ENCODE measurements at regions of chr14 and their contacts with region 1.

Region 1: GRCh38 chr14:77862154-77862786 is 62.4 kb downstream of the ADCK1 start:
- DNase-seq: peak; percentile 52 to 83 (median 70)
- ATAC-seq: peak; percentile 38
- H3K4me3 ChIP-seq: no peak overlapping the region
- H3K4me3 Mint-ChIP-seq: no peak overlapping the region
- H3K27ac ChIP-seq: no peak overlapping the region
- H3K27ac Mint-ChIP-seq: no peak overlapping the region
- H3K4me1 ChIP-seq: no peaks in the 10 kb centered on the region
- H3K4me1 Mint-ChIP-seq: no peaks in the 10 kb centered on the region
- H3K27me3 ChIP-seq: no peaks in the 10 kb centered on the region
- H3K27me3 Mint-ChIP-seq: no peaks in the 10 kb centered on the region
- CTCF ChIP-seq: peak; percentile 78

Region 2: DNA sequence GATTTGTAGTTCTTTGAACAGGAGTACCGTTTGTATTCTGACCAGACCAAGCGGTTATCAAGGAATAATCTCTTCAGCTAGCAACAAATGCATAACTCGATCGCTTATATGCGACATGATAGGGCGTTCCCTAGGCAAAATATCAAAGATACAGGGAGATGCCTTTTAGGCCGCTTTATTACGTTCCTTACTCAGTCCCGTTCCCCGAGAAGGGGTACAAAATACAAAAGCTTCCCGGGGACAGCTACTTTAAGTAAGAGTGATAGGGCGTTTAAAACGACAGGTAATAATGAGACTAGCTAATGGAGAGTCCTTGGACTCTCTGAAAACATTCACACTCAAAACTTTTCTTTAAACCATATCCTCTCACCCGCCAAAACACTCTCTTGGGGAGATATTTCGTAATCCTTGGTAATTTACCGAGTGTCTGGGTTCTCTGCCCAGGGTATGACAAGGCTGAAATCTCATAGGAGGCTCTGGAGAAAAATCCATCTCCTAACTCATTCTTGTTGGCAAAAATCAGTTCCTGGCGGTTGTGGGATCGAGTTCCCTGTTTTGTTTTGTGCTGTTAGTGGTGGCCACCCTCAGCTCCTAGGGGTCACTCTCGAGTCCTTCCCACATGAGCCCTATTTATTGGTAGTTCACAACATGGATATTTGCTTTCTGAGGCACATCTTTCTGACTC is 100.9 kb before region 1 on chr14:
- CTCF ChIA-PET with region 1: no interaction called
- POLR2A ChIA-PET with region 1: no interaction called
- intact Hi-C with region 1: no loop called
- DNase-seq: peak in 1 of 9 experiments; percentile 34
- ATAC-seq: peak; percentile 16
- H3K4me3 ChIP-seq: peak overlapping the region; percentile 78 to 90
- H3K4me3 Mint-ChIP-seq: peak overlapping the region; percentile 96
- H3K27ac ChIP-seq: peak overlapping the region; percentile 97 to 99
- H3K27ac Mint-ChIP-seq: peak overlapping the region; percentile 98
- H3K4me1 ChIP-seq: peaks cover 34% of the 10 kb centered on the region
- H3K4me1 Mint-ChIP-seq: peaks cover 43% of the 10 kb centered on the region
- H3K27me3 ChIP-seq: no peaks in the 10 kb centered on the region
- H3K27me3 Mint-ChIP-seq: no peaks in the 10 kb centered on the region
- CTCF ChIP-seq: no peak

Region 3: GRCh38 chr14:77872983-77873382 is 10.7 kb after region 1 on chr14:
- CTCF ChIA-PET with region 1: interaction called, 12 read pairs
- POLR2A ChIA-PET with region 1: no interaction called
- intact Hi-C with region 1: no loop called
- DNase-seq: no peak
- ATAC-seq: no peak
- H3K4me3 ChIP-seq: no peak overlapping the region
- H3K4me3 Mint-ChIP-seq: no peak overlapping the region
- H3K27ac ChIP-seq: no peak overlapping the region
- H3K27ac Mint-ChIP-seq: no peak overlapping the region
- H3K4me1 ChIP-seq: no peaks in the 10 kb centered on the region
- H3K4me1 Mint-ChIP-seq: no peaks in the 10 kb centered on the region
- H3K27me3 ChIP-seq: no peaks in the 10 kb centered on the region
- H3K27me3 Mint-ChIP-seq: no peaks in the 10 kb centered on the region
- CTCF ChIP-seq: no peak

Region 4: GRCh38 chr14:78048120-78048519 is 185.8 kb after region 1 on chr14:
- CTCF ChIA-PET with region 1: no interaction called
- POLR2A ChIA-PET with region 1: no interaction called
- intact Hi-C with region 1: no loop called
- DNase-seq: no peak
- ATAC-seq: no peak
- H3K4me3 ChIP-seq: no peak overlapping the region
- H3K4me3 Mint-ChIP-seq: no peak overlapping the region
- H3K27ac ChIP-seq: no peak overlapping the region
- H3K27ac Mint-ChIP-seq: no peak overlapping the region
- H3K4me1 ChIP-seq: no peaks in the 10 kb centered on the region
- H3K4me1 Mint-ChIP-seq: no peaks in the 10 kb centered on the region
- H3K27me3 ChIP-seq: no peaks in the 10 kb centered on the region
- H3K27me3 Mint-ChIP-seq: peaks cover 15% of the 10 kb centered on the region
- CTCF ChIP-seq: no peak

Region 5: DNA sequence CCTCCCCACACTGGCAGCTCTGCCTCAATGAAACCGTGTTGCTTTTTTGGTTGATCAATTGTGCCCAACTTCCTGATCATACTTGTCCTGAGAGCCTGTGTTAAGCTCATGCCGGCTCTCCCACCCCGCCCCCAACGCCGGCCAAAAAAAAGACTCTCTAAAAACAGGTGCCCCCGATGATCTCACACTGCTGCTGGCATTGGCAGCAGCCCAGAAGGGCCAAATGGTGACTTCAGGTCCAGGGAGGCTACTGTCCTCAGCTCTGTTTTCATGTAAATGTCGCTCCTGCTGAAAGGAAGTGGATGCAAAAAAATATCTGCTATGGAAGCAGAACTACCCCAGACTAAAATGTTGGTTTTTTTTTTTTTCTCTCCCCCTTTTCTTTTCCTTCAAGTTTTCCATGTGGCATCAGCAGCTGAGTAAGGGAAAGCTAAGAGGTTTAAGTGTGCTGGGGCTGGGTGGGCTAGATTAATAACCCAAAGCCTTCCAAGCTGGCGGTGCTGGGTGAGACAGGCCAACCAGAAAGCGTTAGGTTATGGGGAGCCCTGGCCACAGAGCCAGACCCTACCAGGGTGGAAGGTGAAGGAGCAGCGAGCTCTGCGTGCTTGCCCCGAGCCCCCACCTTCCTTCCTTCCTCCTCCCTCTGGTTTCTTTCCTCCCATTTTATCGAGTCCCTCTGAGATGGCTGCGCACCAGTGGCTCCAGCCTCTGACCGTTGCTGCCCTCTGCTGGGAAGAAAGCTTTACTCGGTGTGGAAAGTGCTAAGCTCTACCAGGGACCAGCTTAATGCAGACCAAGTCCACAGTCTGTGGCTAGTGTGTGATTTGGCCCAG is 704.0 kb after region 1 on chr14:
- CTCF ChIA-PET with region 1: interaction called, 6 read pairs
- POLR2A ChIA-PET with region 1: no interaction called
- intact Hi-C with region 1: loop called in 1 of 2 experiments (anchors 10 kb)
- DNase-seq: peak in 8 of 9 experiments; percentile 23 to 59 (median 46)
- ATAC-seq: peak; percentile 44
- H3K4me3 ChIP-seq: no peak overlapping the region
- H3K4me3 Mint-ChIP-seq: peak overlapping the region; percentile 30
- H3K27ac ChIP-seq: no peak overlapping the region
- H3K27ac Mint-ChIP-seq: no peak overlapping the region
- H3K4me1 ChIP-seq: no peaks in the 10 kb centered on the region
- H3K4me1 Mint-ChIP-seq: peaks cover 3% of the 10 kb centered on the region
- H3K27me3 ChIP-seq: no peaks in the 10 kb centered on the region
- H3K27me3 Mint-ChIP-seq: no peaks in the 10 kb centered on the region
- CTCF ChIP-seq: peak; percentile 40

Measured in CD8-positive, alpha-beta T cell (primary cell).